ENCODE measurements at regions of chr13 and their contacts with region 1.

Region 1: GRCh38 chr13:21476893-21477472 is 17.9 kb upstream of the ZDHHC20 start:
- DNase-seq: peak; percentile 67 to 75 (median 70)
- H3K4me3 ChIP-seq: peak overlapping the region in 1 of 2 donors; percentile 42
- H3K4me3 Mint-ChIP-seq: peak overlapping the region; percentile 75 to 86 (median 83)
- H3K27ac ChIP-seq: no peak overlapping the region
- H3K27ac Mint-ChIP-seq: peak overlapping the region in 6 of 7 donors; percentile 2 to 76 (median 42)
- H3K4me1 ChIP-seq: peaks cover 15% of the 10 kb centered on the region
- H3K4me1 Mint-ChIP-seq: peaks cover 7 to 15% (median 10%) of the 10 kb centered on the region in 4 donors
- H3K27me3 ChIP-seq: no peaks in the 10 kb centered on the region
- H3K27me3 Mint-ChIP-seq: peaks cover 0 to 2% of the 10 kb centered on the region in 2 donors

Region 2: DNA sequence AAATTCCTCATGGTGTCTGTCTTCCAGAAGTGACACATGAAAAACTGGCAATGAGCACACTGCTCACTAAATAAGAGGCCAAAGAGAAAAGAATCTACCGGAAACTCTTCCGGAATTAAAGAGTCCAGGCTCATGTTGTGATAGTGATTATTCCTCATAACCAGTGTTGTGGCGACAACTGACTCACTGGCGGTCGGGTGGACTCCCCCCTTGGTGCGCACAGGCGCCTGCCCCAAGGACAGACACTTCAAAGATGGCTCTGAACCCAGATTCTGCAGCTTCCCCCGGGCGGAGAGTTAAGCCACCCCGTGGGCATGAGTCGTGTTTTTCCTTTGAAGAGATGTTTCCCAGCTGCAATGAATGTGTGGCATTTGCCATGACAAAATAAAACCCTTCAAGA is 763.2 kb before region 1 on chr13:
- CTCF ChIA-PET with region 1: interaction called, 6 read pairs
- POLR2A ChIA-PET with region 1: no interaction called
- intact Hi-C with region 1: loop called (anchors 2 kb)
- DNase-seq: no peak
- H3K4me3 ChIP-seq: no peak overlapping the region
- H3K4me3 Mint-ChIP-seq: no peak overlapping the region
- H3K27ac ChIP-seq: no peak overlapping the region
- H3K27ac Mint-ChIP-seq: no peak overlapping the region
- H3K4me1 ChIP-seq: peaks cover 6% of the 10 kb centered on the region
- H3K4me1 Mint-ChIP-seq: peaks cover 4 to 10% (median 7%) of the 10 kb centered on the region in 4 donors
- H3K27me3 ChIP-seq: no peaks in the 10 kb centered on the region
- H3K27me3 Mint-ChIP-seq: peaks cover 3 to 12% of the 10 kb centered on the region in 2 donors

Region 3: GRCh38 chr13:21106089-21106488 is 370.9 kb before region 1 on chr13:
- CTCF ChIA-PET with region 1: interaction called, 94 read pairs
- POLR2A ChIA-PET with region 1: no interaction called
- intact Hi-C with region 1: loop called (anchors 1 kb)
- DNase-seq: no peak
- H3K4me3 ChIP-seq: no peak overlapping the region
- H3K4me3 Mint-ChIP-seq: no peak overlapping the region
- H3K27ac ChIP-seq: no peak overlapping the region
- H3K27ac Mint-ChIP-seq: no peak overlapping the region
- H3K4me1 ChIP-seq: peaks cover 3% of the 10 kb centered on the region
- H3K4me1 Mint-ChIP-seq: peaks cover 0 to 5% (median 2%) of the 10 kb centered on the region in 4 donors
- H3K27me3 ChIP-seq: no peaks in the 10 kb centered on the region
- H3K27me3 Mint-ChIP-seq: peaks cover 0 to 1% of the 10 kb centered on the region in 2 donors

Region 4: GRCh38 chr13:21291845-21292244 is 185.1 kb before region 1 on chr13:
- CTCF ChIA-PET with region 1: interaction called, 235 read pairs
- POLR2A ChIA-PET with region 1: interaction called, 14 read pairs
- intact Hi-C with region 1: loop called (anchors 1 kb)
- DNase-seq: no peak
- H3K4me3 ChIP-seq: no peak overlapping the region
- H3K4me3 Mint-ChIP-seq: no peak overlapping the region
- H3K27ac ChIP-seq: no peak overlapping the region
- H3K27ac Mint-ChIP-seq: no peak overlapping the region
- H3K4me1 ChIP-seq: peaks cover 3% of the 10 kb centered on the region
- H3K4me1 Mint-ChIP-seq: peaks cover 0 to under 1% (median 0%) of the 10 kb centered on the region in 4 donors
- H3K27me3 ChIP-seq: no peaks in the 10 kb centered on the region
- H3K27me3 Mint-ChIP-seq: peaks cover 0 to 2% of the 10 kb centered on the region in 2 donors

Region 5: GRCh38 chr13:21458813-21459701 is 17.9 kb before region 1 on chr13 and contains the start of gene ZDHHC20:
- CTCF ChIA-PET with region 1: interaction called, 72 read pairs
- POLR2A ChIA-PET with region 1: interaction called, 8 read pairs
- intact Hi-C with region 1: loop called (anchors 2 kb)
- DNase-seq: peak; percentile 82 to 93 (median 86)
- H3K4me3 ChIP-seq: peak within 1 kb of the TSS; percentile 34 to 72
- H3K4me3 Mint-ChIP-seq: peak within 1 kb of the TSS; percentile 92 to 95 (median 94)
- H3K27ac ChIP-seq: peak within 1 kb of the TSS; percentile 86
- H3K27ac Mint-ChIP-seq: peak within 1 kb of the TSS; percentile 84 to 97 (median 94)
- H3K4me1 ChIP-seq: peaks cover 39% of the 10 kb centered on the region
- H3K4me1 Mint-ChIP-seq: peaks cover 30 to 56% (median 42%) of the 10 kb centered on the region in 4 donors
- H3K27me3 ChIP-seq: no peaks in the 10 kb centered on the region
- H3K27me3 Mint-ChIP-seq: no peaks in the 10 kb centered on the region
- total RNA-seq, gene ZDHHC20: 69.5 to 72.3 TPM